Natural killer cell (primary cell): ENCODE measurements at regions of chr3 and their contacts with region 1.

Region 1: DNA sequence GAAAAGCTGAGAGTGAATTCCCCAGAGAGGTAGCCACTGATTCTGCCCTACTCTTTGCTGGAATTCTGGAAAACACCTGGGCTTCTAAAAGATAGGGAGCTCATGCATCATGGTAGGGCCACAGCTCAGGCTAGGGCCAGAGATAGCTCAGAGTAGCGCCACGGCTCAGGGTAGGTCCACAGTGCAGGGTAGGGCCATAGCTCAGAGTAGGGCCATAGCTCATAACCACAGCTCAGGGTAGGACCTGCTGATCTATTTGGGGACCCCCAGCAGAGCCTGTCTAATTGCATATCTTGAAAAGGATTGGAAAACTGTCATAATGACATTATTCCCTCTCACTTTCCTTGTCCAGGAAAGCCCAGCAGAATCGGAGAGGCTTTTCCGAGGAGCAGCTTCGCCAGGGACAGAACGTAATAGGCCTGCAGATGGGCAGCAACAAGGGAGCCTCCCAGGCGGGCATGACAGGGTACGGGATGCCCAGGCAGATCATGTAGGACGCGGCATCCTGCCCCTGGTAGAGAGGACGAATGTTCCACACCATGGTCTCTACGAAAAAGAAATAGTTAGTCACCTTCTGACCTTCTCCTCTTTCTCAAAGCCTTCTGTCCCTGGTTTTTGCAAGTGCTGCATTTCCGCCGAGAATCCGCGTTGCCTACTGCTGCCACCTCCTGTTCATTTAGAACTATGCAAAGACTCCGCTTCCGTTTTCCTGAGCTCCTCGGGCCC is 14.5 kb downstream of the TAGLN3 start:
- DNase-seq: peak; percentile 28 to 78
- ATAC-seq: peak; percentile 69 to 88 (median 87)
- H3K4me3 ChIP-seq: no peak overlapping the region
- H3K4me3 Mint-ChIP-seq: no peak overlapping the region
- H3K27ac ChIP-seq: no peak overlapping the region
- H3K27ac Mint-ChIP-seq: no peak overlapping the region
- H3K4me1 ChIP-seq: peaks cover 5% of the 10 kb centered on the region
- H3K4me1 Mint-ChIP-seq: peaks cover 0 to 3% of the 10 kb centered on the region in 2 donors
- H3K27me3 ChIP-seq: no peaks in the 10 kb centered on the region
- H3K27me3 Mint-ChIP-seq: no peaks in the 10 kb centered on the region
- CTCF ChIP-seq: peak; percentile 64

Region 2: GRCh38 chr3:111989061-111989678 is 24.1 kb before region 1 on chr3:
- intact Hi-C with region 1: loop called (anchors 1 kb)
- DNase-seq: peak in 1 of 2 donors; percentile 66
- ATAC-seq: peak; percentile 73 to 91 (median 87)
- H3K4me3 ChIP-seq: no peak overlapping the region
- H3K4me3 Mint-ChIP-seq: no peak overlapping the region
- H3K27ac ChIP-seq: no peak overlapping the region
- H3K27ac Mint-ChIP-seq: no peak overlapping the region
- H3K4me1 ChIP-seq: no peaks in the 10 kb centered on the region
- H3K4me1 Mint-ChIP-seq: peaks cover 20 to 28% of the 10 kb centered on the region in 2 donors
- H3K27me3 ChIP-seq: no peaks in the 10 kb centered on the region
- H3K27me3 Mint-ChIP-seq: no peaks in the 10 kb centered on the region
- CTCF ChIP-seq: peak; percentile 75